ENCODE measurements at regions of chr17 and their contacts with region 1.

Region 1: DNA sequence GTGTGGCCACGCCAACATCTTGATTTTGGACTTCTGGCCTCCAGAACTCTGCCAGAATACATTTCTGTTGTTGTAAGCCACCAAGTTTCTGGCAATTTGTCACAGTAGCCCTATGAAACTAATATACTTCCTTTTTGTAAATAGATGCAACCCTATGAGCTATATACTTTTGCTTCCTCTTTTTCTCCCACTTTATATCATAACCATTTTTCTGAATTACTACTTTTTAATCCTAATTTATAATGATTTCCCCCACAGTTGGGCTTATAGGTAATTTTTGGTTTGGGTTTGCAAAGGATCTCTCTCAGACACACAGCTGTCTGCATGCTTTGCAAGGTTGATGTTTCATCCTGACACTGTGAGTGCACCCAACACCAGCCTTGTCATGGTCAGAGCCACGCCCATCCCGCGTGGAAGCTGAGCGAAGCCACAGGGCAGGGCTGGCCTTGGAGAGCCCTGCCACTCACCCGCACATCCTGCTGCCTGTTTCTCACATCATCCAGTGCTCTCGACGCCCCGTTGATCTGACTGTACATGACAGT is 5.8 kb downstream of the TRIM25 start:
- DNase-seq: peak; percentile 64
- H3K4me3 Mint-ChIP-seq: peak overlapping the region; percentile 57
- H3K27ac Mint-ChIP-seq: peak overlapping the region; percentile 88
- H3K4me1 Mint-ChIP-seq: peaks cover 66% of the 10 kb centered on the region
- H3K27me3 Mint-ChIP-seq: no peaks in the 10 kb centered on the region

Region 2: GRCh38 chr17:56918916-56919639 is 11.0 kb after region 1 on chr17:
- CTCF ChIA-PET with region 1: interaction called, 3 read pairs
- POLR2A ChIA-PET with region 1: interaction called, 10 read pairs
- DNase-seq: no peak
- H3K4me3 Mint-ChIP-seq: no peak overlapping the region
- H3K27ac Mint-ChIP-seq: no peak overlapping the region
- H3K4me1 Mint-ChIP-seq: peaks cover 35% of the 10 kb centered on the region
- H3K27me3 Mint-ChIP-seq: no peaks in the 10 kb centered on the region

Region 3: DNA sequence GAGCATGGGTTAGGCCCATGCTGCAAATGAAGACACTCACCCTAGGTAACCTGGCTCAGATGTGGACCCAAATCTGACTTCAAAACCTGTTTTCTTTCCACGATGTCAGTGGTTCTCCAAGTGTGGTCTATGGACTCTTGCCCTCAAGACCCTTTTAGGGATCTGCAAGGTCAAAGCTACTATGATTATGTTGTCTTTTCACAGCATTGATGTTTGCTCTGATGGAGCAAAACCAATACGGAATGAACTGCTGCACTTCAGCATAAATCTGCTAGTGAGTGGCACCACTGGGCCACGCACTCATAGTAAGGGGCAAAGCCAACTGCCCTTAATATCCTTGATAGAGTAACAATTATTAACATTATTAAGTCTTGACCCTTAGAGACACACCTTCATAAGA is 27.4 kb after region 1 on chr17:
- CTCF ChIA-PET with region 1: interaction called, 4 read pairs
- POLR2A ChIA-PET with region 1: interaction called, 13 read pairs
- DNase-seq: no peak
- H3K4me3 Mint-ChIP-seq: no peak overlapping the region
- H3K27ac Mint-ChIP-seq: no peak overlapping the region
- H3K4me1 Mint-ChIP-seq: peaks cover 30% of the 10 kb centered on the region
- H3K27me3 Mint-ChIP-seq: no peaks in the 10 kb centered on the region